ENCODE measurements at regions of chr2 and their contacts with region 1.

Region 1: GRCh38 chr2:27356382-27357181 is at the start of gene GTF3C2:
- DNase-seq: peak; percentile 74 to 97
- H3K4me3 ChIP-seq: peak within 1 kb of the TSS; percentile 78 to 89
- H3K27ac ChIP-seq: peak within 1 kb of the TSS; percentile 75 to 89
- H3K4me1 ChIP-seq: peaks cover 8 to 23% of the 10 kb centered on the region in 2 donors
- H3K27me3 ChIP-seq: no peaks in the 10 kb centered on the region
- CTCF ChIP-seq: peak in 1 of 3 experiments; percentile 11
- total RNA-seq, gene GTF3C2: 76.2 TPM

Region 2: DNA sequence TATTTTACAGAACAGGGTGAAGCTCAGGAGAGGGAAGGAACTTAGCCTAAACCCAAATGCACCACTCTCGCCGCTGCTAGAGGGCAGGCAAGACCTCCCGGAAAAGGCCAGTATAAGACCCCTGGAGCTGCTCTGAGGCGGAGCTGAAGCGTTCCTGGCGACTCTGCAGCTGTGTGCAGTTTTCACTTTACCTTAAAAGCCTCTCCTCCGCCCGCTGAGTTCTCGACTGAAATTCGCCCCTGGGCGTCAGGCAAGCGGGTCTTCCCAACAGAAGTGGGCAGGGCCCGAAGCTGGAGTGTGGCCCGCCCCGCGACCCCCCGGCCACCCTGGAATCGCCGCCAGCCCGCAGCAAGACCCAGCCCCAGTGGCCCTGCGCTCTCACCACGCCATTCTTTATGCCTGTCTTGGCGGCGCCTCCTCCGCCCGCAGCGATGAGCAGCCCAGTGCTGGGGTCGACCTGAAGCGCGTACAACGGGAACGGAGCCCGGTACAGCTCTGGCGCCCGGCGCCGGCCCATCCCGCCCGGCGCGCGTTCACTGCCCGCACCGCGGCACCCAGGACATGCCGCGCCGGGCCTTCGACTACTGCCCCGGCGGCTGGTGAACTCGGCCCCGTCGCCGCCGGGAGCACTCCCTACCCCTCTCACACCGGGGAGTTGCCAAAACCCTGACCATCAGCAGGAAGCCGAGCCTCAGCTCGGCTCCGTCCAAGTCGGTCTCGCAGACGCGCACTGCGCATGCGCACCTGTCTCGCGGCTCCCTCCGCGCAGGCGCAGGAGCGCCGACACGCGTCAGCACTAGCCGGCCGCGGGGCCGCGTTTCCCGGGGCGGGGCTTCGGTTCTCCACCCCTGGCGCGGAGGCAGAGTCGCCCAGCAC is 222.4 kb before region 1 on chr2 and contains the start of gene PREB:
- intact Hi-C with region 1: loop called (anchors 5 kb)
- DNase-seq: peak; percentile 77 to 98
- H3K4me3 ChIP-seq: peak within 1 kb of the TSS; percentile 89 to 96
- H3K27ac ChIP-seq: peak within 1 kb of the TSS; percentile 90 to 91
- H3K4me1 ChIP-seq: peaks cover 5 to 11% of the 10 kb centered on the region in 2 donors
- H3K27me3 ChIP-seq: no peaks in the 10 kb centered on the region
- CTCF ChIP-seq: peak in 1 of 3 experiments; percentile 11
- total RNA-seq, gene PREB: 116 TPM

Region 3: GRCh38 chr2:27217217-27218121 is 139.1 kb before region 1 on chr2 and contains the start of gene CAD:
- intact Hi-C with region 1: loop called (anchors 10 kb)
- DNase-seq: peak; percentile 59 to 91
- H3K4me3 ChIP-seq: peak within 1 kb of the TSS; percentile 53 to 72
- H3K27ac ChIP-seq: peak within 1 kb of the TSS; percentile 53 to 54
- H3K4me1 ChIP-seq: peaks cover 12 to 18% of the 10 kb centered on the region in 2 donors
- H3K27me3 ChIP-seq: no peaks in the 10 kb centered on the region
- CTCF ChIP-seq: peak; percentile 30 to 32 (median 30)
- total RNA-seq, gene CAD: 63.4 TPM

Region 4: GRCh38 chr2:27322766-27323595 is 33.6 kb before region 1 on chr2 and contains the start of gene MPV17:
- intact Hi-C with region 1: loop called (anchors 2 kb)
- DNase-seq: peak; percentile 74 to 93
- H3K4me3 ChIP-seq: peak within 1 kb of the TSS; percentile 65 to 77
- H3K27ac ChIP-seq: peak within 1 kb of the TSS; percentile 90
- H3K4me1 ChIP-seq: peaks cover 0 to 14% of the 10 kb centered on the region in 2 donors
- H3K27me3 ChIP-seq: no peaks in the 10 kb centered on the region
- CTCF ChIP-seq: no peak
- total RNA-seq, gene MPV17: 239 TPM

Region 5: GRCh38 chr2:27370026-27370815 is 13.6 kb after region 1 on chr2 and contains the starts of genes EIF2B4 and SNX17:
- intact Hi-C with region 1: loop called (anchors 1 kb)
- DNase-seq: peak; percentile 97 to 100
- H3K4me3 ChIP-seq: peak within 1 kb of the TSS; percentile 70 to 84
- H3K27ac ChIP-seq: peak within 1 kb of the TSS; percentile 87 to 95
- H3K4me1 ChIP-seq: peaks cover 9 to 23% of the 10 kb centered on the region in 2 donors
- H3K27me3 ChIP-seq: no peaks in the 10 kb centered on the region
- CTCF ChIP-seq: peak; percentile 68 to 87 (median 83)
- total RNA-seq, gene EIF2B4: 34.8 TPM
- total RNA-seq, gene SNX17: 94.0 TPM

Region 6: GRCh38 chr2:27380626-27381545 is 24.3 kb after region 1 on chr2 and contains the start of gene ZNF513:
- intact Hi-C with region 1: loop called (anchors 1 kb)
- DNase-seq: peak; percentile 79 to 98
- H3K4me3 ChIP-seq: peak within 1 kb of the TSS; percentile 89 to 96
- H3K27ac ChIP-seq: peak within 1 kb of the TSS; percentile 89 to 90
- H3K4me1 ChIP-seq: peaks cover 0 to 16% of the 10 kb centered on the region in 2 donors
- H3K27me3 ChIP-seq: no peaks in the 10 kb centered on the region
- CTCF ChIP-seq: no peak
- total RNA-seq, gene ZNF513: 17.7 TPM

Region 7: DNA sequence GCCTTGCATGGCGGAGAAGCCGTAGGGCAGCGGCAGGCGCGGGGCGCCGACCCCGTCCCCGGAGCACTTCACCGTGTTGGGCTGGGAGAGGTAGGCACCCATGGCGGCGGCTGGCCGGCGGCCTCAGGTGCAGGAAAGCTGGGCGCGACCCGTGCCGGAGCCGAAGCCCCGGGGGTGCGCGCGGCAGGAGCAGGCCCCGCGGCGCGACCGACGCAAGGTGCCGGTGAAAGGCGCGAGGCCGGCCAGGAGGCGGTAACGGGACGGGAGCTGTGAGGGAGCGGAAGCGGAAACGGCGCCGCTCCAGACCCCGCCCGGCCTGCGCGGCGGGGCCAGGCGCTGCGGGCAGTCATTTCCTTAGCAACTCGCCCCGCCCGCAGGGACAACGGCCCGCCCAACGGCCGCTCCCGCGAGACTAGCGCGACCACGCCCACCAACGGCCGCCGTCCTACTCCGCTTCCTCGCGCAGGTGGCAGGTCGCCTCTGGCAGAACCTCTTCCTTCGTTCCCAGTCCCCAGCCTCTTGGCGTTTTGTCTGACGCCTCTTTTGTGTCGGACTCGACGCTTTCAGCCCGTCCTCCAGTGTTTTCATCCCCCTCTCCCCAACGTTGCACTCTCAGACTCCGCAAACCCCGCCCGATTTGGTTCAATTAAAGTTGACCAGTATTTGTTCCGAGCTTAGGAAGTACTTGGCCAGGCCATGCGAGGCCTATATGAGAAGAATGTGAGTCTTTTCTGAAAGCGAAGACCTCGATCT is 52.9 kb after region 1 on chr2 and contains the start of gene PPM1G:
- intact Hi-C with region 1: loop called (anchors 1 kb)
- DNase-seq: peak; percentile 56 to 95
- H3K4me3 ChIP-seq: peak within 1 kb of the TSS; percentile 96 to 97
- H3K27ac ChIP-seq: peak within 1 kb of the TSS; percentile 80 to 91
- H3K4me1 ChIP-seq: peaks cover 6 to 12% of the 10 kb centered on the region in 2 donors
- H3K27me3 ChIP-seq: no peaks in the 10 kb centered on the region
- CTCF ChIP-seq: no peak
- total RNA-seq, gene PPM1G: 24.7 TPM